Activated CD4-positive, alpha-beta T cell treated with anti-CD3 and anti-CD28 coated beads, Interleukin-2, amount 10 ng/mL, durations not matched to agents 24 days and 14 days (primary cell): ENCODE measurements at regions of chr21 and their contacts with region 1.

Region 1: DNA sequence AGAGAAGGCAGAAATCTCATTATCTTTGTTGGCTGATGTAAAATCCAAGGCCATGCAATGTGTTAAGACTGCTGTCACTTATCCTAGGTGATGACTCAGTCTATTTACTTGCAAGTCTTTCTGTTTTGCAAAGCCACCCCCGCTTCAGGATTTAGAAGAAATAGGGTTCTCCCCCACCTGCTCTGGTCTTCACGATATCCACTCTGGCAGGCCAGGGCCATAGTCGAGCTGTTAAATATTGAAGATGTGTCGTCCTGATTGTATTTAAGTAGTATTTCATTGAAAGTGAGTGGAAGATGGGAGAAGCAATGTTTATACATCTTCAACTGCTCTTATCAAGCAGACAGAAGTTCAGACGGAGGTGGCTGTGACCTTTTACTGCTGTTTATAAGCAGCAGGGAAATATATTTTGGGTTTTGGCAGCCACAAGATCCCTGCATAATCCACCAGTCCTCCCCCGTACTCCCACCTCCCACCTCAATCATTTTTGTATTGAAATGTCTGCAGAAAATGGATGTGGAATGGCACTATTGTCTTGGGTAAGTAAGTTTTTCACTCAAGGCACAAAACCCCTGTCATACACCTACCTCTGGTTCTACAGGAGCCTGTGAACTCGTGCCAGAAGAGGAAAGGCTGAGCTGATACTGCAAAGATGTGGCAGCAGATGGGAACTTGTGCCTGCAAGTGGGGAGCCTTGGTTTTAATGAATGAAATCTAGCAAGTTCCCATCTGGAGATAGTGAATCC is 117.4 kb downstream of the MRPS6 start:
- DNase-seq: peak; percentile 58
- H3K4me3 Mint-ChIP-seq: peak overlapping the region; percentile 46
- H3K27ac Mint-ChIP-seq: peak overlapping the region; percentile 88
- H3K4me1 Mint-ChIP-seq: peaks cover 35% of the 10 kb centered on the region
- H3K27me3 Mint-ChIP-seq: no peaks in the 10 kb centered on the region

Region 2: DNA sequence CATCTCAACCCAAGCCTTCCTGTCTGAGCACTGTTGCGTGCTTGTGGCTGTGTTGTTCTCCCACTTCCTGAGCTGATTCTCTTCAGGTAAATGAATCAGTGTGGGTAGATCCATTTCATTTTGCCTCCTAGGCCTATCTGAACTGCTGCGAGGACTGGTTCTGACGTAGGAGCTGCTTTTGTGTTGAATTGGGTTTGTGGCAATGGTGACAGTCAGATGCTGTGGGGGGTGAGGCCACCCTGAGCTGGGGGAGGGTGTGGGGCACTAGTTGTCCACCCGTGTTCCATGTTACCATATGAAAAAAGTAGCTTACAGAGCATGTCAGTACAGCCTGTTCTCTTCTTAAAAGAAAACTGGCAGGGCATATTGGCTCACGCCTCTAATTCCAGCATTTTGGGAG is 35.9 kb before region 1 on chr21:
- intact Hi-C with region 1: loop called (anchors 2 kb)
- DNase-seq: peak; percentile 87
- H3K4me3 Mint-ChIP-seq: peak overlapping the region; percentile 33
- H3K27ac Mint-ChIP-seq: peak overlapping the region; percentile 94
- H3K4me1 Mint-ChIP-seq: peaks cover 46% of the 10 kb centered on the region
- H3K27me3 Mint-ChIP-seq: no peaks in the 10 kb centered on the region

Region 3: GRCh38 chr21:34202553-34203372 is 12.0 kb after region 1 on chr21:
- intact Hi-C with region 1: loop called (anchors 1 kb)
- DNase-seq: no peak
- H3K4me3 Mint-ChIP-seq: peak overlapping the region; percentile 85
- H3K27ac Mint-ChIP-seq: peak overlapping the region; percentile 87
- H3K4me1 Mint-ChIP-seq: peaks cover 62% of the 10 kb centered on the region
- H3K27me3 Mint-ChIP-seq: no peaks in the 10 kb centered on the region

Region 4: GRCh38 chr21:34642211-34643075 is 451.7 kb after region 1 on chr21:
- intact Hi-C with region 1: no loop called
- DNase-seq: no peak
- H3K4me3 Mint-ChIP-seq: no peak overlapping the region
- H3K27ac Mint-ChIP-seq: no peak overlapping the region
- H3K4me1 Mint-ChIP-seq: peaks cover 24% of the 10 kb centered on the region
- H3K27me3 Mint-ChIP-seq: no peaks in the 10 kb centered on the region